Mammary epithelial cell (primary cell): ENCODE measurements at regions of chr11 and their contacts with region 1.

Region 1: DNA sequence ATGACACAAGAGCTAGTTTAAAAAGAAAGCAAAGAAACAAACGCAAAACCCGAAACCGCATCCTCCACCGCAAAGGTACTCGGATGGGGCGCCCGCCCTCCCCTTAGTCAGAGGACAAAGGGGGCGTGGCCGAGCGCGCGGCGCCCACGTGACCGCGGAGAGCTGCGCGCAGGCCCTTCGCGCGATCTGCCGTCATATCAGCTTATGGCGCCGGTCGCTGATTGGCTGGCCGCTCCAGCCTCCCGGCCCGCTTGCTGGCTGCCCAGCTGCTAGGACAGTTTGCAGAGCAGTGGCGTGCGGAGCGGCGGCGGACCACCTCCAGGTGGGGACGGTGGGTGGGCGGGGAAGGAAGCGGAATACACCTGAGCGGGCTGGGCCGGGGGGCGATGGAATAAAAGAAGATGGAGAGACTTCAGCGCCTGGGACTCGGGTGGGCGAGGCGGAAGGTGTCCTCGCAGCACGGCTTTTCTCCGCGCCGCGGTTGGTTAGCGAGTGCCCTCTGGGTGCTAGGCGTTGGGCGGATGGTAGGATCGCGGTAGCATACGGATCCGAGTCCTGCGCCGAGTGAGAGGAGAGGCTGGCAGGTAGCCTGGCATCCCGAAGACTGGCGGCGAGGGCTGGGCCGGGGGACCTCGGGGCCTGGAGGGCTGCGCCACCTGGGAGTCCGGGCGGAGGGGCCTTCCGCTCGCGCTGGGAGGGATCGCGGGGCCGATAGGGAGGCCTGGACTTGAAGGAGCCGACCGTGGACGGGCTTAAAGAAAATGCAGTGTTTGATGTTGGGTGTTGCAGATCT is at the start of gene SC5D:
- DNase-seq: peak; percentile 94
- H3K4me3 ChIP-seq: peak within 1 kb of the TSS; percentile 87 to 96 (median 94)
- H3K27ac ChIP-seq: peak within 1 kb of the TSS; percentile 85
- H3K4me1 ChIP-seq: peaks cover 12% of the 10 kb centered on the region
- H3K27me3 ChIP-seq: no peaks in the 10 kb centered on the region
- CTCF ChIP-seq: peak in 1 of 2 donors; percentile 10
- total RNA-seq, gene SC5D: 64.4 to 67.8 TPM

Region 2: DNA sequence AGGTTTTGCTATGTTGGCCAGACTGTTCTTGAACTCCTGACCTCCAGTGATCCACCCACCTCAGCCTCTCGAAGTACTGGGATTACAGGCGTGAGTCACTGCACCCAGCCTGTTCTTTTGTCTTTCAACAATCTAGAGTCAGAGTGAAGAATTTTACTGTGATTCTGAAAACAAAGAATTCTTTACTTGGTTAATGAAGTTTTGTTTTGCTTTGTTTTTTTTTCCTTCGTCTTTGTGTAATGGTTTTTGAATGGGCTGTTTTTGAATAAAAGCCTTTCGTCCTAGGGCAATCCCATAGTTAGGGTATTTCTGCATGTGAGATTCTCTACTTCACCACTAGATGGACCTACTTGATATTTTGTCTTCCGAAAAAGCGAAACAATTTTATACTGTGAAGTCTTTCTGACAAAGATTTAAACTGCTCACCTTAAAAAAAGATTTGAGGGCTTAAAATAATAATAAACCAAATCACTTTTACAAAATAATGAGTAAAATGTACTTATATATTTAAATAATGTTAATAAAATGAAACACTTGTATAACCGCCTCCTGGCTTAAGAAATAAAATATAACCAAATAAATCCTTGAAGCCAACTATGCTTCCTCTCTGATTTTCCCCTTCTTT is 43.5 kb before region 1 on chr11:
- CTCF ChIA-PET with region 1: interaction called, 5 read pairs
- dilution Hi-C with region 1: no loop called
- in situ Hi-C with region 1: no loop called
- intact Hi-C with region 1: loop called (anchors 1 kb)
- DNase-seq: peak; percentile 79
- H3K4me3 ChIP-seq: peak overlapping the region in 1 of 3 experiments; percentile 25
- H3K27ac ChIP-seq: no peak overlapping the region
- H3K4me1 ChIP-seq: peaks cover 11% of the 10 kb centered on the region
- H3K27me3 ChIP-seq: no peaks in the 10 kb centered on the region
- CTCF ChIP-seq: peak; percentile 71 to 76